GM10248 (cell line): ENCODE measurements at regions of chr16 and their contacts with region 1.

Region 1: GRCh38 chr16:21603928-21604327 is 4.6 kb downstream of the METTL9 start:
- DNase-seq: no peak
- CTCF ChIP-seq: no peak

Region 2: DNA sequence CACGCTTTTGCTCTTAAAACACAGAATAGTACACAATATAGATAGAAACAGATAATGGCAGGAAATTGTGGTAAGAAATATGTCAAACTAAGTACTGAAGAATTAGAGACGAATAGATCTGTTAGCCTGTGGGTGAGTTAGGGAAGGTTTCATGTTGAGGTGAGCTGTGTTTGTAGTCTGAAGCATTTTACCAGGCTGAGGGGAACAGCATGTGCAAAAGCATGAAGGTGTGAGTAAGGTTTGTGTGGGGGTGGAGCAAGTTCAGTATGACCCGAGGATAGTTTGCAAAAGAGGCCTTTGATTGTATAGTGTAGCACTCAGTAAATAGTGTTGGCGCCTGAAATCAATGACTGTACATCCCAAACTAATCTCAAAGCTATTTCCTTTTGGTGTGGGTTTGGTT is 34.6 kb after region 1 on chr16:
- CTCF ChIA-PET with region 1: interaction called, 20 read pairs
- POLR2A ChIA-PET with region 1: no interaction called
- DNase-seq: no peak
- CTCF ChIP-seq: no peak

Region 3: DNA sequence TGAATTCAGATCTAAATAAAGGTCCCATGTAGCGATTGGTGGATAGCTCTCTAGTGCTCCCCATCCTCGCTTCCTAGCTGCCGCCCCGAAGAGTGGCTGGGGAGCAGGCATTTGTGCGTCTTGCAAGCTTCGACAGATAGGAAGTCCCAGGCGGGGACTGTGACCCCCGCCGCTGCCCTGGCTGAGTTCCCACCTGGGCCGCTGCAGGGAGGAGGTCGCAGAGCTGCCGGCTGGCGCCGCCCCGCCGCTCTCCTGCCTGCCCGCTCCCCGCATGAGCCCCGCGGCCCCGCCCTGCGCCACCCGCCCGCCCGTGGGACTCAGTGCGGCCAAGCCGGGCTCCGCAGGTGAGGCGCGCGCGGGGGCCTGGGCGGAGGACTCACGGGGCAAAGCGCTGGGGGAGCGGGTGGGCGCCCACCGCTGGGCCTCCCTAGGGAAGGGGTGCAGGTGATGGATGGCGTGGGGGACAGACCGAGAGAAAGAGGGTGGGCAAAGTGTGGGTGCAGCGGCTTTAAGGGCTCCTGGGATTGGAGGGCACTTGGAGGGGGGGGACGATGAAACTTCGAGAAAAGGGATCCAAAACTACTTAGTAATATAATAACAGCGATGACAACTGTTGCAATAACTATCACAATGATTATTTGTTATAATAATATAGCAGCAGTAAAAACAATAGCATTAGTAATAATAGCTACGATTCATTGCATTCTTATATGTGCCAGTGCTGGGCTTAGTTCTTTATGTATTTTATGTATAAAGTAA is 60.1 kb after region 1 on chr16 and contains the start of gene OTOA:
- CTCF ChIA-PET with region 1: no interaction called
- POLR2A ChIA-PET with region 1: no interaction called
- DNase-seq: peak; percentile 30
- CTCF ChIP-seq: no peak